ENCODE measurements at regions of chr4 and their contacts with region 1.

Region 1: GRCh38 chr4:181528570-181529184 is 714.5 kb upstream of the TENM3 start:
- DNase-seq: peak; percentile 46
- H3K4me3 Mint-ChIP-seq: no peak overlapping the region
- H3K27ac Mint-ChIP-seq: no peak overlapping the region
- H3K4me1 Mint-ChIP-seq: no peaks in the 10 kb centered on the region
- H3K27me3 Mint-ChIP-seq: peaks cover 2% of the 10 kb centered on the region

Region 2: GRCh38 chr4:181143250-181143854 is 385.3 kb before region 1 on chr4:
- CTCF ChIA-PET with region 1: interaction called, 26 read pairs
- intact Hi-C with region 1: loop called (anchors 1 kb)
- DNase-seq: peak; percentile 82
- H3K4me3 Mint-ChIP-seq: no peak overlapping the region
- H3K27ac Mint-ChIP-seq: no peak overlapping the region
- H3K4me1 Mint-ChIP-seq: no peaks in the 10 kb centered on the region
- H3K27me3 Mint-ChIP-seq: peaks cover 7% of the 10 kb centered on the region

Region 3: GRCh38 chr4:181281451-181281850 is 247.2 kb before region 1 on chr4:
- CTCF ChIA-PET with region 1: no interaction called
- intact Hi-C with region 1: no loop called
- DNase-seq: no peak
- H3K4me3 Mint-ChIP-seq: no peak overlapping the region
- H3K27ac Mint-ChIP-seq: no peak overlapping the region
- H3K4me1 Mint-ChIP-seq: no peaks in the 10 kb centered on the region
- H3K27me3 Mint-ChIP-seq: no peaks in the 10 kb centered on the region

Measured in activated naive CD4-positive, alpha-beta T cell treated with anti-CD3 and anti-CD28 coated beads for 36 hours (primary cell).